B cell (primary cell): ENCODE measurements at regions of chr22 and their contacts with region 1.

Region 1: DNA sequence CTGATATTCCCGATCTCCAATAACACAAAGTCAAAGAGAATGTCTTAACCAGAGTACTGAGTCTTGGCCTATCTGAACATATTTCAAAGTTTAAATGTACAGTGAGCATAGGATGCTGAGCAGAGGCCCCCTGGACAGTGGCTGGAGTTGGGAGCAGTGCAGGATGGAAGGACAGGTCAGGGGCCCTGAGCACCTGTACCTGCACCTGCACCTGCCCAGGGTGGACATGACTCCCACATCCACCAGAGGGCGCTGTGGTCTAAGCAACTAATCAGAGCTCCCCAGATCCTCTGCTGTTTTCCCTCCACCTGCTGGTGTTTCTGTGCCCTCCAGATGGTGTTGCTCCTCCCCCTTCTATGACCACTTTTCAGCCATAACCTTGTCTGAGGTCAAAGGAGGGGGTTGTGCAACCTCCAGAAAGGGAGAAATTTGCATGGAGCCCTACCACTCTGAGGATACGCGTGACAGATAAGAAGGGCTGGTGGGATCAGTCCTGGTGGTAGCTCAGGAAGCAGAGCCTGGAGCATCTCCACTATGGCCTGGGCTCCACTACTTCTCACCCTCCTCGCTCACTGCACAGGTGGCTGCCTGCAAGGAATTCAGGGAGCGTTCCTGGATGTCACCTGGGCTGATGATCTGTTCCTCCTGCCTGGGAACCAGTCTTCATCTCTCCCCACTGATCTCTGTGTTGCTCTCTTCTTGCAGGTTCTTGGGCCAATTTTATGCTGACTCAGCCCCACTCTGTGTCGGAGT is 49.1 kb upstream of the VPREB1 start:
- DNase-seq: peak; percentile 92
- ATAC-seq: peak; percentile 75
- H3K4me3 ChIP-seq: peak overlapping the region in 4 of 5 experiments; percentile 3 to 38 (median 28)
- H3K4me3 Mint-ChIP-seq: peak overlapping the region; percentile 82
- H3K27ac ChIP-seq: peak overlapping the region; percentile 54 to 75
- H3K27ac Mint-ChIP-seq: peak overlapping the region; percentile 91
- H3K4me1 ChIP-seq: peaks cover 41 to 46% of the 10 kb centered on the region in 2 donors
- H3K4me1 Mint-ChIP-seq: peaks cover 62% of the 10 kb centered on the region
- H3K27me3 ChIP-seq: no peaks in the 10 kb centered on the region
- H3K27me3 Mint-ChIP-seq: no peaks in the 10 kb centered on the region
- CTCF ChIP-seq: peak; percentile 93

Region 2: DNA sequence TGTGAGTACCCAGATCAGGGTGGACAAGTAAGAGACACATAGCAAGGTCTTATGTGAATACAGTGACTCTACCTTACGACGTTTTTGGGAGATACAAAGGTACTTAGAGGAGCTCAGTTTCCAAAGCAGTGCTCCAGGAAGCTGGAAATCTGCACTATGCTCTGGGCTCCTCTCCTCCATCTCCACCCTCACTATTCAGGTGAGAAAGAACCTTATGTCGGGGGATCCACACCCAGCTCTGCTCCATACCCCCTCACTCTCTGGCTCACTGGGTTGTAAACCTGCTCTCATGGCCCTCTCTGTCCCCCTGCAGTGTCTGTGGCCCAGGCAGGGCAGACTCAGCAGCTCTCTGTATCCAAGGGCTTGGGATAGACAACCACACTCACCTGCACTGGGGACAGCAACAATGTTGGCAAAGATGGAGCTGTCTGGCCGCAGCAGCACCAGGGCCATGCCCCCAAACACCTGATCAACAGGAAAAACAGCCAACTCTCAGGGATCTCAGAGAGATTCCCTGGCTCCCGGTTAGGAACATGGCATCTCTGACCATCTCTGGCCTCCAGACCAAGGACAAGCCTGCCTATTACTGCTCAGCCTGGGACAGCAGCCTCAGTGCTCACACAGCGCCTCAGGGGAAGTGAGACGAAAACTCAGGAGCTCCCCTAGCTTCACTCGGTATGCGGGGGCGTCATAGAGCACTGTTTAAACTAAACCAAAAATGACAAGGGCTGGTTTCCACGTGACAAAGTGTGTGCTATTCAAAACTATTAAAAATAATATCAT is 152.0 kb before region 1 on chr22:
- CTCF ChIA-PET with region 1: interaction called, 12 read pairs
- POLR2A ChIA-PET with region 1: interaction called, 3 read pairs
- intact Hi-C with region 1: no loop called
- DNase-seq: peak; percentile 42
- ATAC-seq: peak; percentile 70
- H3K4me3 ChIP-seq: peak overlapping the region in 2 of 5 experiments; percentile 48 to 54
- H3K4me3 Mint-ChIP-seq: peak overlapping the region; percentile 67
- H3K27ac ChIP-seq: no peak overlapping the region
- H3K27ac Mint-ChIP-seq: peak overlapping the region; percentile 85
- H3K4me1 ChIP-seq: peaks cover 38 to 54% of the 10 kb centered on the region in 2 donors
- H3K4me1 Mint-ChIP-seq: peaks cover 75% of the 10 kb centered on the region
- H3K27me3 ChIP-seq: no peaks in the 10 kb centered on the region
- H3K27me3 Mint-ChIP-seq: no peaks in the 10 kb centered on the region
- CTCF ChIP-seq: no peak

Region 3: GRCh38 chr22:22156716-22157347 is 38.6 kb before region 1 on chr22:
- CTCF ChIA-PET with region 1: interaction called, 166 read pairs
- POLR2A ChIA-PET with region 1: interaction called, 24 read pairs
- intact Hi-C with region 1: loop called (anchors 1 kb)
- DNase-seq: peak; percentile 91
- ATAC-seq: peak; percentile 79
- H3K4me3 ChIP-seq: peak overlapping the region in 2 of 5 experiments; percentile 11 to 17
- H3K4me3 Mint-ChIP-seq: peak overlapping the region; percentile 86
- H3K27ac ChIP-seq: peak overlapping the region; percentile 92
- H3K27ac Mint-ChIP-seq: peak overlapping the region; percentile 99
- H3K4me1 ChIP-seq: peaks cover 42 to 53% of the 10 kb centered on the region in 2 donors
- H3K4me1 Mint-ChIP-seq: peaks cover 51% of the 10 kb centered on the region
- H3K27me3 ChIP-seq: no peaks in the 10 kb centered on the region
- H3K27me3 Mint-ChIP-seq: no peaks in the 10 kb centered on the region
- CTCF ChIP-seq: peak; percentile 92

Region 4: DNA sequence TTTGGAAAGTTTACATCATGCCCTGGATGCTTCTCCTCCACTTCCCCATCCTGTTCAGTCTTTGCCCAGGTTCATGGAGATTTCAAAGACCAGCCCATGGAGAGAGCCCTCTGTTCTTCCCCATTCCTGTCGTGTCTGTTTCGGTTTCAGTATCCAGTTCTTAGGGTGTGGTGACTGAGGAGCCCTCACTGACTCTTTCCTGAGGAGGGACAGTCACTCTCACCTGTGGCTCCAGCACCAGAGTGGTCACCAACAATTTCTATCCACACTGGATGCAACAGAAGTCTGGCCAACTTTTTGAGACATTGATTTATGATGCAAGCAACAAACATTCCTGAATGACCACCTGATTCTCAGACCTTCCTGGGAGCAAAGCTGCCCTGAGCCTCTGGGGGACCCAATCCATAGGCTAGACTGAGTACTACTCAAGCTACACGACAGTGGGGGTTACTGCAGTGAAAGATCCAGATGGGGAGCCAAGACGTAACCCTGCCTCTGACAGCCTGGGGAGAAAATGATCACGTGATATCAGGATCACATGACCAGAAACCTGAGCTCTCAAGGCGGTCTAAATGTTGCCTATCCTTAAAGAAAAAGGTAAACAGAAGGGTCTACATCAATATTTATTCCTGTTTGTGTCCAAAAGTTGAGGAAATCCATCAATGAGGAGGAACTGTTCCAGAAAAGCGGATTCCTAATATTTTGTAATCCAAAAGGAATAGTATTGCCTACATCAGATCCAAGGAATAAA is 27.1 kb before region 1 on chr22:
- CTCF ChIA-PET with region 1: interaction called, 166 read pairs
- POLR2A ChIA-PET with region 1: interaction called, 38 read pairs
- intact Hi-C with region 1: loop called (anchors 1 kb)
- DNase-seq: peak; percentile 74
- ATAC-seq: peak; percentile 55
- H3K4me3 ChIP-seq: peak overlapping the region; percentile 20 to 59 (median 40)
- H3K4me3 Mint-ChIP-seq: peak overlapping the region; percentile 92
- H3K27ac ChIP-seq: peak overlapping the region; percentile 96 to 98
- H3K27ac Mint-ChIP-seq: peak overlapping the region; percentile 100
- H3K4me1 ChIP-seq: peaks cover 80 to 88% of the 10 kb centered on the region in 2 donors
- H3K4me1 Mint-ChIP-seq: peaks cover 81% of the 10 kb centered on the region
- H3K27me3 ChIP-seq: no peaks in the 10 kb centered on the region
- H3K27me3 Mint-ChIP-seq: no peaks in the 10 kb centered on the region
- CTCF ChIP-seq: no peak

Region 5: DNA sequence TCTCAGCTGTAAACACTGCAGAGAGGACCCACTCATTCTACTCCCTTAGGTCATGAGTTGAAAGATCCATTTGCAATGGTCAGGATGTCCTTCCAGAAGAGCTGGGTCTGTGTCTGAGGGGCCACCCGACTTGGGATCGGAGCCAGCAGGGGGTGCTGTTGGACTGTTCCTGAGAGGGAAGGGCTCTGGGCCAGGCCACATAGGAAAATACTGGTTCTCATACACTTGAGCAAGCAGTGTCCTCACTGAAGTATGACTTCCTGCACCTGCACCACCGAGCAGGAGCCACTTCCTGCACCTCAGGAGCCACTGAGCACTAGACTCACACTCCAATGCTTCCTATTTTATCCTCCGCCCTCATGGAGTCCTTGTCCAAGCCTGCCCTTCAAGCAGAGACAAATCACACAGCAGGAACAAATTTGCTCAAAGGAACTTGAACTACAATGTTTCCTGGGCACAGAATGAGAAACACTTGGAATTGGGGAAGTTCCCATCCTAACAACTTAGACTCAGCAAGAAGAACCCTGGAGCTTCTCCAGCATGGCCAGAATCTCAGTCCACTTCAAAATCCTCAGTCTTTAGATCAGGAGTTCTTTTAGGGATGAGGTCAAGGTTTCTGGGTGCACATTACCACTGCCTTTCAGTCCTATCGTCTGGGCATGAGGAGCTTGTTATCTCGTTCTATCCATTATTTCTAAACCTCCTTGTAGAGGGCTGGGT is 12.6 kb after region 1 on chr22:
- CTCF ChIA-PET with region 1: interaction called, 111 read pairs
- POLR2A ChIA-PET with region 1: interaction called, 4 read pairs
- intact Hi-C with region 1: loop called (anchors 1 kb)
- DNase-seq: peak; percentile 90
- ATAC-seq: peak; percentile 85
- H3K4me3 ChIP-seq: peak overlapping the region in 1 of 5 experiments; percentile 12
- H3K4me3 Mint-ChIP-seq: peak overlapping the region; percentile 67
- H3K27ac ChIP-seq: peak overlapping the region; percentile 45 to 51
- H3K27ac Mint-ChIP-seq: peak overlapping the region; percentile 93
- H3K4me1 ChIP-seq: peaks cover 53 to 57% of the 10 kb centered on the region in 2 donors
- H3K4me1 Mint-ChIP-seq: peaks cover 54% of the 10 kb centered on the region
- H3K27me3 ChIP-seq: no peaks in the 10 kb centered on the region
- H3K27me3 Mint-ChIP-seq: no peaks in the 10 kb centered on the region
- CTCF ChIP-seq: peak; percentile 89

Region 6: GRCh38 chr22:22235558-22235957 is 40.1 kb after region 1 on chr22:
- CTCF ChIA-PET with region 1: interaction called, 45 read pairs
- POLR2A ChIA-PET with region 1: no interaction called
- intact Hi-C with region 1: loop called (anchors 1 kb)
- DNase-seq: peak; percentile 67
- ATAC-seq: peak; percentile 24
- H3K4me3 ChIP-seq: no peak overlapping the region
- H3K4me3 Mint-ChIP-seq: peak overlapping the region; percentile 37
- H3K27ac ChIP-seq: no peak overlapping the region
- H3K27ac Mint-ChIP-seq: peak overlapping the region; percentile 53
- H3K4me1 ChIP-seq: peaks cover 16 to 27% of the 10 kb centered on the region in 2 donors
- H3K4me1 Mint-ChIP-seq: peaks cover 24% of the 10 kb centered on the region
- H3K27me3 ChIP-seq: no peaks in the 10 kb centered on the region
- H3K27me3 Mint-ChIP-seq: no peaks in the 10 kb centered on the region
- CTCF ChIP-seq: peak; percentile 48

Region 7: DNA sequence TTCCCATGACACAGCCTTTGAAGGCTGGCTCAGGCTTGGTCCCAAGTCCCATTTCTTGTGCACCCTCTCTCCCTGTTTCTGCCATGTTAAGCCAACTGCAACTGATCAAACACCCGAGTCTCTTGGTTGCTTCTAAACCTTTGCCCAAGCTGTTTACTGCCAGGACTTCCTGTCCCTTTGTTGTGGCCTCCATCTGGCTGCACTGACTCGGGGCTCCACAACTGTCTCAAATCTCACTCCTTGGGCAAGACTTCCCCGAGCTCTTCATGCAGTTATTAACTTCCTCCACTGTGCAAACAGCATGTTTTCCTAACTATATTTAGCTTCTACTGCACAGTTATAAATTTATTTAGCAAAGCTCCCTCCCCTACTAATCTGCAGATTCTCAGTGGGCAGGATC is 53.4 kb after region 1 on chr22:
- CTCF ChIA-PET with region 1: no interaction called
- POLR2A ChIA-PET with region 1: no interaction called
- intact Hi-C with region 1: no loop called
- DNase-seq: no peak
- ATAC-seq: peak; percentile 28
- H3K4me3 ChIP-seq: no peak overlapping the region
- H3K4me3 Mint-ChIP-seq: peak overlapping the region; percentile 27
- H3K27ac ChIP-seq: peak overlapping the region in 1 of 2 donors; percentile 31
- H3K27ac Mint-ChIP-seq: peak overlapping the region; percentile 57
- H3K4me1 ChIP-seq: peaks cover 43 to 45% of the 10 kb centered on the region in 2 donors
- H3K4me1 Mint-ChIP-seq: peaks cover 47% of the 10 kb centered on the region
- H3K27me3 ChIP-seq: no peaks in the 10 kb centered on the region
- H3K27me3 Mint-ChIP-seq: no peaks in the 10 kb centered on the region
- CTCF ChIP-seq: no peak

Region 8: DNA sequence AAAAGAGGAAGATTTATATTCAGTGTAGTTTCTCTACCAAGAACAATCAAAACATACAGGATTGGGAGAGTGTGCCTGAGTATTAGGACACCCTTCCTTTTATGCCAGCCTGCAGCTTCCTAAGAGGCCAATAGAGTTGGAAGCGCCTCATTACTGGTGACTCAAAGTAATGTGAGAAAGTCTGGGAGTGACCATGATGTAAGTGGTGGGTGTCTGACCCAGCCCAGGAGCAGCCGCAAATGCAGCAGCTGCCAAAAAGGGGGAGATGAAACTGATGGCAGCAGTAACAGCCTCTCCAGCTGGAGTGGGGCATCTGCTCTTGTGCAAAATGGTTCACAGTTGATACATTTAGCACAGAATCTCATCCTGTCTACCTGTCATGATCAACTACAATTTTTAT is 251.1 kb after region 1 on chr22:
- CTCF ChIA-PET with region 1: no interaction called
- POLR2A ChIA-PET with region 1: no interaction called
- intact Hi-C with region 1: no loop called
- DNase-seq: no peak
- ATAC-seq: no peak
- H3K4me3 ChIP-seq: no peak overlapping the region
- H3K4me3 Mint-ChIP-seq: no peak overlapping the region
- H3K27ac ChIP-seq: no peak overlapping the region
- H3K27ac Mint-ChIP-seq: no peak overlapping the region
- H3K4me1 ChIP-seq: peaks cover 21% of the 10 kb centered on the region in 2 donors
- H3K4me1 Mint-ChIP-seq: peaks cover 21% of the 10 kb centered on the region
- H3K27me3 ChIP-seq: no peaks in the 10 kb centered on the region
- H3K27me3 Mint-ChIP-seq: no peaks in the 10 kb centered on the region
- CTCF ChIP-seq: no peak